GM10248 (cell line): ENCODE measurements at regions of chr7 and their contacts with region 1.

Region 1: GRCh38 chr7:117731455-117731854 is 141.8 kb downstream of the CTTNBP2 start:
- DNase-seq: peak; percentile 63
- CTCF ChIP-seq: no peak

Region 2: GRCh38 chr7:117715784-117716445 is 15.5 kb before region 1 on chr7:
- CTCF ChIA-PET with region 1: interaction called, 49 read pairs
- POLR2A ChIA-PET with region 1: no interaction called
- DNase-seq: peak; percentile 38
- CTCF ChIP-seq: peak; percentile 69

Region 3: GRCh38 chr7:117750612-117751563 is 19.4 kb after region 1 on chr7:
- CTCF ChIA-PET with region 1: interaction called, 10 read pairs
- POLR2A ChIA-PET with region 1: no interaction called
- DNase-seq: peak; percentile 20
- CTCF ChIP-seq: peak; percentile 51

Region 4: GRCh38 chr7:117941138-117941810 is 209.8 kb after region 1 on chr7:
- CTCF ChIA-PET with region 1: no interaction called
- POLR2A ChIA-PET with region 1: no interaction called
- DNase-seq: no peak
- CTCF ChIP-seq: no peak